HCT116 (cell line): ENCODE measurements at regions of chr15 and their contacts with region 1.

Region 1: DNA sequence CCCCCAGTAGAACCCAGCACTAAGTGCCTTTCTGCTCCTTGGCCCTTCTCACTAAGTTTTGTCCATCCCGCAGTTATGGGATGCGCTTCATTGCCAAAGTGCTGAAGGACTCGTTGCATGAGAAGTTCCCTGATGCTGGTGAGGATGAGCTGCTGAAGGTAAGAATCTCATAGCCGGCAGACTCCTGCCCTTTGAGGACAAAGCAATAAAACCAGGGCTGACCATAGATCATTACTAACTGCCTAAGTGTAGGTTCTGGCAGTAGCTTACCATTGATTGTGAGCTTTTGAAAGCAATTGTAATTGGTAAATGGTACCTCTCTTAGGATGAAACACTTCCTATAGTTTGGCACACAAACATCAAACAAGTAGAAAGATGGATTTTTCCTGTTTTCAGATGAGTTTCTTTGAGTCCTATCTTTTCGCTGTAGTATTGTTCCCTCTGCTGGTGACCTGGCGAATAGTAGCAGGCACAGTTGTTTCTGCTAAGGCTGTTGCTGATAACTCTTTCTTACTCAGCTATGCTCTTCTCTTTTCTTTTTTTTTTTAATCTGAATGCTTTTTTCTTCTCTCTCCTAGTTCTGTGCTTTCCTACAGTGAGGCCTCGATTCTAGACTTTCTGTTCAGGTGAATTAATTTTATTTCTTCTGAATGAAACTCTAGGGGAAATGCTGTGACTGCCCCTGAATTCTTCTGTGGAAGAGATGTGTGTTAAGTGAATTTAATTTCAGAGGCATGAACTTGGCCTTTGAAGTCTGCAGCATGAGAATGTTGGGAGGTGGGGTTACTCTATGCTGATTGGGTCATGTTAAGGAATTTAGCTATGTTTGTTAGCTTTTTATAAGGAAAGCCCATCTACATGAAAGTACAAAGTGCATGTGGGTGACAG is 47.4 kb upstream of the CRTC3 start:
- DNase-seq: peak; percentile 34
- ATAC-seq: peak; percentile 55; the same call in 1 of the 2 replicates
- H3K4me3 ChIP-seq: no peak overlapping the region
- H3K27ac ChIP-seq: no peak overlapping the region
- H3K4me1 ChIP-seq: peaks cover 22 to 28% of the 10 kb centered on the region in 2 experiments
- H3K27me3 ChIP-seq: no peaks in the 10 kb centered on the region
- CTCF ChIP-seq: peak; percentile 76 to 88 (median 85)
- POLR2A ChIP-seq: no peak
- RAD21 ChIP-seq: peak; percentile 94

Region 2: DNA sequence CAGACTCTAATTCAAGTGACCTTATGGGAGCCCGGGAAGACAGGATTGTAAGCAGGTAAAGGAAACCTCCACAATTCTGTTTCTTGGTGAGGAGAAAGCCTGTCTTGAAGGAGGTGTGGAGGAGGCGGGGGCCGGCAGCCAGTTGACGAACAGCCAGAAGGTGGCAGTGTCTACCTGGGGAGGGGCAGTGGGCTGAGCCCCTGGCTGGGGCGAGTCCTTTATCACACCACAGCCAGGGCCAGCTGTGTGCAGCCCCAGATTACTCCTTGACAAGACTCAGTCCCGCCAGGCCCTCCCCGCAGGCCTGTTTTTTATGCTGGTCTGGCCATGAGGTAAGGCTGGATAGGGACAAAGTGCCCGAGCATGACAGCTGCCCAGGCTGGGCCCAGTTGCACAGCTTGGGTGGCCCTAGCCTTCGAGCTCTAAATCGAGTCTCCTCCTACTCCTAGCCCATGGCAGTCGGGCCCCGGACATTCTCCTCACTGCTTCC is 339.2 kb before region 1 on chr15:
- CTCF ChIA-PET with region 1: interaction called, 4 read pairs
- POLR2A ChIA-PET with region 1: no interaction called
- RAD21 ChIA-PET with region 1: no interaction called
- intact Hi-C with region 1: loop called (anchors 10 kb)
- DNase-seq: peak; percentile 57
- ATAC-seq: peak; percentile 99
- H3K4me3 ChIP-seq: no peak overlapping the region
- H3K27ac ChIP-seq: no peak overlapping the region; the same call in 1 of the 2 replicates
- H3K4me1 ChIP-seq: peaks cover 0 to 7% of the 10 kb centered on the region in 2 experiments; a peak in 3 of 4 replicates
- H3K27me3 ChIP-seq: no peaks in the 10 kb centered on the region
- CTCF ChIP-seq: peak; percentile 87 to 92 (median 88)
- POLR2A ChIP-seq: no peak
- RAD21 ChIP-seq: peak; percentile 96

Region 3: DNA sequence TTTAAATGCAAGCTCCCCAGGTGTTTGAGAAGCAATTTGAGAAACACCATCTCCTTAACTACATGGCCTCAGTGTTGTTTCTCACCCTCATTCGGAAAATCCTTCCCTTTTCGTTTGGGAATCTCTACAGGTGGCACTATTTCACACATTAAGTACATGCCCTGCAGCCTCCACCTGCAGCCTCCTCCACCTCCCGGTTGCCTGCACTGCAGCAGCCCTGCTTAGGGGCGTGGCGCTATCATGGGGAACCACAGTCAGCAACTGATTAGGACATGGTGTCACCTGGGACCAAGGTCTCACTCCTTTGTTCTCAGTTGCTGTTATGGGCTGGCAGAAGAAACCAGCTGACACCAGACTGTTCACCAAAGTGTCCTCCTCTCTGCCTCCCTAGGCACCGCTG is 142.0 kb before region 1 on chr15:
- CTCF ChIA-PET with region 1: no interaction called
- POLR2A ChIA-PET with region 1: no interaction called
- RAD21 ChIA-PET with region 1: no interaction called
- intact Hi-C with region 1: loop called (anchors 1 kb)
- DNase-seq: peak; percentile 73
- ATAC-seq: peak; percentile 100
- H3K4me3 ChIP-seq: no peak overlapping the region
- H3K27ac ChIP-seq: no peak overlapping the region
- H3K4me1 ChIP-seq: peaks cover 3 to 14% of the 10 kb centered on the region in 2 experiments; a peak in 3 of 4 replicates
- H3K27me3 ChIP-seq: no peaks in the 10 kb centered on the region
- CTCF ChIP-seq: peak; percentile 42 to 62 (median 53); a peak in 5 of 6 replicates
- POLR2A ChIP-seq: no peak
- RAD21 ChIP-seq: peak; percentile 79

Region 4: GRCh38 chr15:90419738-90420406 is 62.5 kb before region 1 on chr15:
- CTCF ChIA-PET with region 1: no interaction called
- POLR2A ChIA-PET with region 1: no interaction called
- RAD21 ChIA-PET with region 1: no interaction called
- intact Hi-C with region 1: loop called (anchors 5 kb)
- DNase-seq: no peak
- ATAC-seq: peak; percentile 85
- H3K4me3 ChIP-seq: peak overlapping the region in 1 of 2 experiments; percentile 41; a peak in 2 of 4 replicates
- H3K27ac ChIP-seq: peak overlapping the region; percentile 77
- H3K4me1 ChIP-seq: peaks cover 45 to 52% of the 10 kb centered on the region in 2 experiments
- H3K27me3 ChIP-seq: no peaks in the 10 kb centered on the region
- CTCF ChIP-seq: no peak
- POLR2A ChIP-seq: no peak
- RAD21 ChIP-seq: no peak

Region 5: DNA sequence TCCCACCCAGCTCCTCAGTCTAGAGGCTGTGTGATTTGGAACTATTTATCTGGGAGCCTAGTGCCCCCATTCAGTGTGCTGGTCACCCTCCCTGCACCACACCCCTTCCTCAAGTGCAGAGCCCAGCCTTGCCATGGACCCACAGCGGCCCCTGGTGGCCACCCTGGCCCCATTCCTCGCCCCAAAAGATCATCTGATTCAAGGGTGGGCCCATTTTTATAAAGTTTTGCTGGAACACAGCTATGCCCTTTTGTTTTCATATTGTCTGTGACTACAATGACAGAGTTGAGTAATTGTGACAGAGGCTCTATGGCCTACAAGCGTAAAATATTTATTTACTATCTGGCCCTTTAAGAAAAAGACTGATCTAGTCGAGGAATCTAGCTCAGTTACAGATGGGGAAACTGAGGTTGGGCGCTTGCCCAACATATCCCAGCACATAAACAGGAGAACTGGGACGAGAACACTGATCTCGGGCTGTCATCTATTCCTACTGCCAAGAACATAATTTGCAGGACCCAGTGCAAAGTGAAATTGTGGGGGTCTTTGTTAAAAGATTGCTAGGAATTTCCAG is 403.8 kb after region 1 on chr15:
- CTCF ChIA-PET with region 1: no interaction called
- POLR2A ChIA-PET with region 1: no interaction called
- RAD21 ChIA-PET with region 1: no interaction called
- intact Hi-C with region 1: loop called (anchors 5 kb)
- DNase-seq: no peak
- ATAC-seq: peak; percentile 84
- H3K4me3 ChIP-seq: no peak overlapping the region
- H3K27ac ChIP-seq: no peak overlapping the region
- H3K4me1 ChIP-seq: peaks cover 0 to 3% of the 10 kb centered on the region in 2 experiments; a peak in 1 of 4 replicates
- H3K27me3 ChIP-seq: no peaks in the 10 kb centered on the region
- CTCF ChIP-seq: peak; percentile 95 to 100 (median 98)
- POLR2A ChIP-seq: no peak
- RAD21 ChIP-seq: peak; percentile 99

Region 6: DNA sequence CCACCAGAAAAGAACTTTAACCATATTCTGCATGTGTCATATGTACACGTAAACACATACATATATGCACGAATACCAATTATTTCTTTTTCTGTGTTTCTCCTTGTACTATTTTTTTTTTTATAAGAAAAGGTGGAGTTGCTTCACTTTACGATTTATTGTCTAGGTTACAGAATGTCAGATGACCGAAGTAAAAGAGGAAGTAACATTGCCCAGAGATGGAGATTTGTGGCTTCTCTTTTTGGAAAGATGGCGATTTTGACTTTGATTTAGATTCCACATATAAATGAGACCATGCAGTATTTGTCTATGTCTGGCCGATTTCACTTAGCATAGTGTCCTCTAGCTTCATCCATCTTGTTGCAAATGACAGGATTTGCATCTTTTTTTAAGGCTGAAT is 910.8 kb after region 1 on chr15:
- CTCF ChIA-PET with region 1: no interaction called
- POLR2A ChIA-PET with region 1: no interaction called
- RAD21 ChIA-PET with region 1: no interaction called
- intact Hi-C with region 1: no loop called
- DNase-seq: no peak
- ATAC-seq: no peak
- H3K4me3 ChIP-seq: no peak overlapping the region
- H3K27ac ChIP-seq: no peak overlapping the region
- H3K4me1 ChIP-seq: no peaks in the 10 kb centered on the region
- H3K27me3 ChIP-seq: peaks cover 8% of the 10 kb centered on the region
- CTCF ChIP-seq: no peak
- POLR2A ChIP-seq: no peak
- RAD21 ChIP-seq: no peak